WTC11 (cell line): ENCODE measurements at regions of chr12 and their contacts with region 1.

Region 1: GRCh38 chr12:95582230-95583058 is 31.2 kb upstream of the USP44 start:
- DNase-seq: no peak
- ATAC-seq: peak; percentile 65
- H3K4me3 Mint-ChIP-seq: no peak overlapping the region
- H3K27ac Mint-ChIP-seq: no peak overlapping the region; the same call in 1 of the 2 replicates
- H3K4me1 Mint-ChIP-seq: peaks cover 4% of the 10 kb centered on the region; the same call in 1 of the 2 replicates
- H3K27me3 Mint-ChIP-seq: no peaks in the 10 kb centered on the region
- CTCF ChIP-seq: no peak

Region 2: DNA sequence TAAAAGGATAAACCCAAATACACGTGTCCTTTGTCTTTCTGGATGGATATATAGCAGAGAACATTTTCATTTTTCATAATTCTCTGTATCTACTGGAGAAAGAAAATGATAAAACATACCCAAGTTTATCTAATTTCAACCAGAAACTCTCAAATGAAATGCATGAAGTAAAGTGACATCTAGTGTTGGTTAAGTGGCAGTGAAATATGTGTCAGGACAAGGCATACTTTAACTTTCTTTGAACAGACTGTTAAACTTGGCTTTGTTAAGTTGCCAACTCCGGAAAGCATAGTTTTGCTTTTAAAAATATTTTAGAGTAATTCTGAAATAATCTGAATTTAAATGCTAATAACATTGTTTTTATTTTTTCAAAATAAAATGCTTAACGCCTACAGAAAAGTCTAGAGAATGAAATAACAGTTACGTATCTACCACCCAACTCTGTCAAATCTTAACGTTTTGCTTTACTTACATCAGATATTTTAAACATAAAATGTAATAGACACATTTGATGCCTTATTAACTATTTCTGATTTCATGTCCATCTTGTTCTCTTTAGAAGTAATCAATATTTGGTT is 233.3 kb after region 1 on chr12:
- CTCF ChIA-PET with region 1: interaction called, 10 read pairs
- POLR2A ChIA-PET with region 1: no interaction called
- DNase-seq: no peak
- ATAC-seq: no peak
- H3K4me3 Mint-ChIP-seq: no peak overlapping the region
- H3K27ac Mint-ChIP-seq: no peak overlapping the region
- H3K4me1 Mint-ChIP-seq: peaks cover 3% of the 10 kb centered on the region; the same call in 1 of the 2 replicates
- H3K27me3 Mint-ChIP-seq: no peaks in the 10 kb centered on the region
- CTCF ChIP-seq: peak; percentile 23; the same call in 1 of the 2 replicates